Activated CD4-positive, alpha-beta T cell treated with anti-CD3 and anti-CD28 coated beads for 36 hours (primary cell): ENCODE measurements at regions of chr4 and their contacts with region 1.

Region 1: GRCh38 chr4:47383829-47384427 is 79.6 kb downstream of the COMMD8 start:
- DNase-seq: no peak
- ATAC-seq: no peak
- H3K4me3 Mint-ChIP-seq: no peak overlapping the region
- H3K27ac Mint-ChIP-seq: no peak overlapping the region
- H3K4me1 Mint-ChIP-seq: no peaks in the 10 kb centered on the region
- H3K27me3 Mint-ChIP-seq: peaks cover 5% of the 10 kb centered on the region

Region 2: GRCh38 chr4:46844325-46844917 is 539.5 kb before region 1 on chr4:
- CTCF ChIA-PET with region 1: interaction called, 5 read pairs
- POLR2A ChIA-PET with region 1: no interaction called
- intact Hi-C with region 1: loop called (anchors 1 to 5 kb)
- DNase-seq: peak; percentile 65
- ATAC-seq: no peak
- H3K4me3 Mint-ChIP-seq: no peak overlapping the region
- H3K27ac Mint-ChIP-seq: no peak overlapping the region
- H3K4me1 Mint-ChIP-seq: no peaks in the 10 kb centered on the region
- H3K27me3 Mint-ChIP-seq: no peaks in the 10 kb centered on the region

Region 3: GRCh38 chr4:46931981-46932380 is 451.9 kb before region 1 on chr4:
- CTCF ChIA-PET with region 1: no interaction called
- POLR2A ChIA-PET with region 1: no interaction called
- intact Hi-C with region 1: loop called in 1 of 2 experiments (anchors 2 kb)
- DNase-seq: peak; percentile 34
- ATAC-seq: peak; percentile 26
- H3K4me3 Mint-ChIP-seq: no peak overlapping the region
- H3K27ac Mint-ChIP-seq: no peak overlapping the region
- H3K4me1 Mint-ChIP-seq: no peaks in the 10 kb centered on the region
- H3K27me3 Mint-ChIP-seq: peaks cover 4% of the 10 kb centered on the region

Region 4: GRCh38 chr4:47032415-47033106 is 351.4 kb before region 1 on chr4:
- CTCF ChIA-PET with region 1: no interaction called
- POLR2A ChIA-PET with region 1: no interaction called
- intact Hi-C with region 1: loop called in 1 of 2 experiments (anchors 10 kb)
- DNase-seq: peak; percentile 67
- ATAC-seq: peak; percentile 81
- H3K4me3 Mint-ChIP-seq: peak overlapping the region; percentile 49
- H3K27ac Mint-ChIP-seq: no peak overlapping the region
- H3K4me1 Mint-ChIP-seq: peaks cover 15% of the 10 kb centered on the region
- H3K27me3 Mint-ChIP-seq: peaks cover 31% of the 10 kb centered on the region

Region 5: GRCh38 chr4:47122592-47123291 is 261.2 kb before region 1 on chr4:
- CTCF ChIA-PET with region 1: interaction called, 5 read pairs
- POLR2A ChIA-PET with region 1: no interaction called
- intact Hi-C with region 1: loop called in 1 of 2 experiments (anchors 5 kb)
- DNase-seq: peak; percentile 61
- ATAC-seq: peak; percentile 75
- H3K4me3 Mint-ChIP-seq: no peak overlapping the region
- H3K27ac Mint-ChIP-seq: no peak overlapping the region
- H3K4me1 Mint-ChIP-seq: no peaks in the 10 kb centered on the region
- H3K27me3 Mint-ChIP-seq: peaks cover 8% of the 10 kb centered on the region

Region 6: DNA sequence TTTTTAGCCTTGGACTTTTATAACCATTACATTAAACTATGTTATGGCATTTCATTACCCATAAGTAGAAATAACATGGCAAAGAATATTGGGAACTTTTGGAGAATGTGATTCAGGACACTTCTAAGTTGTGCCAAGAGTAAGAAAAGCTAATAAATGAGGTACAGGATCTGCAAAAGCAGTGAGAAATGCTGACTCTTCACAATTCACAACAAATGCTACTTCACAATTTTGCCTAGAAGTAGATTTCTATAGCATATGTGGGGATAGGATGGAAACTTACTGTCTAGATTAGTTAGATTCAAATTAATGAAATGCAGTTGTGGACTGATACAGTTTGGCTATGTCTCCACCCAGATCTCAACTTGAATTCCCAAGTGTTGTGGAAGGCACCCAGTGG is 94.1 kb before region 1 on chr4:
- CTCF ChIA-PET with region 1: no interaction called
- POLR2A ChIA-PET with region 1: no interaction called
- intact Hi-C with region 1: loop called in 1 of 2 experiments (anchors 5 kb)
- DNase-seq: no peak
- ATAC-seq: no peak
- H3K4me3 Mint-ChIP-seq: no peak overlapping the region
- H3K27ac Mint-ChIP-seq: no peak overlapping the region
- H3K4me1 Mint-ChIP-seq: no peaks in the 10 kb centered on the region
- H3K27me3 Mint-ChIP-seq: peaks cover 4% of the 10 kb centered on the region